Esophagus muscularis mucosa (tissue), 4 donors: ENCODE measurements at regions of chr7 and their contacts with region 1.

Region 1: GRCh38 chr7:94374231-94374630 is 20.5 kb upstream of the COL1A2 start:
- DNase-seq: no peak
- H3K4me3 ChIP-seq: peak overlapping the region; percentile 30 to 43 (median 37)
- H3K27ac ChIP-seq: peak overlapping the region; percentile 83 to 90 (median 86)
- H3K4me1 ChIP-seq: peaks cover 17 to 60% (median 44%) of the 10 kb centered on the region in 4 donors
- H3K27me3 ChIP-seq: no peaks in the 10 kb centered on the region
- CTCF ChIP-seq: peak in 2 of 3 experiments; percentile 8 to 33
- EP300 ChIP-seq: no peak
- POLR2A ChIP-seq: no peak

Region 2: DNA sequence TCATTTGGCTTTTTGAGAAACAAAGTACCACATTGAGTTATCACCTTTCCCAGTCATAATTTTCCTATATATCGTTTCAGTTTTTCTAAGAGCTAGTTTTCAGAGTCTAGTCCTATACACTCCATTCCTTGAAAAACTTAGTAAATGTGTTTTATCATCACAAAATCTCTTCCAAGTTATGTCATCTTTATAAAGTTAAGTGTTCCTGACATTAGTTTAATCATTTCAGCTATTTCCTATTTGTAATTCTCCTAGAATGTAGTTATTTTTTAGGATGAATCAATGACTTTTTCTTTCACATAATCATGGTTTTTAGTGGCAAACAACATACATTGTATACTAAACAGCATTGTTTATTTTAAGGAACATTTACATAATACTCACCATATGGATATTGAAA is 178.4 kb before region 1 on chr7:
- intact Hi-C with region 1: no loop called
- DNase-seq: no peak
- H3K4me3 ChIP-seq: no peak overlapping the region
- H3K27ac ChIP-seq: no peak overlapping the region
- H3K4me1 ChIP-seq: no peaks in the 10 kb centered on the region
- H3K27me3 ChIP-seq: no peaks in the 10 kb centered on the region
- CTCF ChIP-seq: no peak
- EP300 ChIP-seq: no peak
- POLR2A ChIP-seq: no peak

Region 3: DNA sequence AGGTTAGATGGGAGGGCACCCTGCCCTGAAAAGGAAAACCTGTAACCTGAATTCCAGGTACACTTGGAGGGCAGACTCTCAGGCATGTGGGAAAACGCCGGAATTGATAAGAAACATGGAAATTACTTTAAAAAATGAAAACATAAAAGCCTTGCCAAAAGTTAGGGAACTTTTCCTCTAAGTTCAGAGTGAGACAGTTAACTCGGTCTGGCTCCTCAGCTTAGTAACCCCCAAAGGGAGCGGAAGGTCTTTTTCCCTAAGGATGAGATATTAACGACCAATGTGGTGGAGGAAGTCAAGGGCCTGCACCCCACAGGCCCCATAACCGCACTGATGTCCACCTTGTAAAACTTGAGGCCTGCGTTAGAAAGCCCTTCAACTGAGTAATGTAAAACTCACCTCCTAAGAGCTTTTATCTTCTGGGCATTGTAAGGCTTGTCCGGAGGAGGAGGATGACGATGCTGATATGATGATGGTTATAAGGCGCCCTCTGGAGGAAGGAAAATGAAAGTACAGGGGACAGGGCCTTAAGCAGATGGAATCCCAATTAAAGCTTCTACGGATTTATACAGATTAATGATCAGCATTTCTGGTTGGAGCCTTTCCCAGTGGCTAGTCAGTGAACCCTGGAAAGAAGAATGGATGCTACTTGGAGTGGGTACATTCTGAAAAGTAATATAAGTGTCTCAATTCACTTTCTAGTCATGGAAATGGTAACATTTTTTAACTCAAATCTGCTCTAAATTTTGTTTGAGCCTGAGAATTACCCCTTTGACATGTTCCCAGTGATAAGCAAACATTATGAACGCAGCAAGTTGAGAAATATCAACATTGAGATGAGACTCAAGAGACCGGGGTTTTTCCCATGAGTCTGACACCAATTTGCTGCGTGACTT is 21.2 kb after region 1 on chr7:
- intact Hi-C with region 1: loop called (anchors 2 kb)
- DNase-seq: no peak
- H3K4me3 ChIP-seq: peak overlapping the region; percentile 69 to 85 (median 72)
- H3K27ac ChIP-seq: peak overlapping the region; percentile 91 to 97 (median 95)
- H3K4me1 ChIP-seq: peaks cover 14 to 73% (median 61%) of the 10 kb centered on the region in 4 donors
- H3K27me3 ChIP-seq: no peaks in the 10 kb centered on the region
- CTCF ChIP-seq: peak; percentile 85 to 92 (median 90)
- EP300 ChIP-seq: no peak
- POLR2A ChIP-seq: no peak

Region 4: GRCh38 chr7:94486230-94486629 is 112.0 kb after region 1 on chr7:
- intact Hi-C with region 1: no loop called
- DNase-seq: no peak
- H3K4me3 ChIP-seq: no peak overlapping the region
- H3K27ac ChIP-seq: no peak overlapping the region
- H3K4me1 ChIP-seq: no peaks in the 10 kb centered on the region
- H3K27me3 ChIP-seq: no peaks in the 10 kb centered on the region
- CTCF ChIP-seq: no peak
- EP300 ChIP-seq: no peak
- POLR2A ChIP-seq: no peak

Region 5: DNA sequence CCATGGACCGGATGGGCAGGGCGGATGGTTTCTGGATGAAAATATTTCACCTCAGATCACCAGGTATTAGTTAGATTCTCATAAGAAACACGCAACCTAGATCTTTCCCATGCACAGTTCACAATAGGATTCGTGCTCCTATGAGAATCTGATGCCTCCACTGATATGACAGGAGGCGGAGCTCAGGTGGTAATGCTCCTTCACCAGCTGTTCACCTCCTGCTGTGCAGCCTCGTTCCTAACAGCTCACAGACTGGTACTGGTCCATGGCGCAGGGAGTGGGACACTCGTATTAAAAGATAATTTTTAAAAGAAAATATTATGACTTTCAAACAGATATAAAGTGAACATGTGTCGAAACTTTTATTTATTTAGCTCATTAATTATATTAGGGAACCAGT is 128.9 kb after region 1 on chr7:
- intact Hi-C with region 1: no loop called
- DNase-seq: no peak
- H3K4me3 ChIP-seq: no peak overlapping the region
- H3K27ac ChIP-seq: no peak overlapping the region
- H3K4me1 ChIP-seq: no peaks in the 10 kb centered on the region
- H3K27me3 ChIP-seq: no peaks in the 10 kb centered on the region
- CTCF ChIP-seq: no peak
- EP300 ChIP-seq: no peak
- POLR2A ChIP-seq: no peak